Heart right ventricle (tissue), 16 donors: ENCODE measurements at regions of chr22 and their contacts with region 1.

Region 1: DNA sequence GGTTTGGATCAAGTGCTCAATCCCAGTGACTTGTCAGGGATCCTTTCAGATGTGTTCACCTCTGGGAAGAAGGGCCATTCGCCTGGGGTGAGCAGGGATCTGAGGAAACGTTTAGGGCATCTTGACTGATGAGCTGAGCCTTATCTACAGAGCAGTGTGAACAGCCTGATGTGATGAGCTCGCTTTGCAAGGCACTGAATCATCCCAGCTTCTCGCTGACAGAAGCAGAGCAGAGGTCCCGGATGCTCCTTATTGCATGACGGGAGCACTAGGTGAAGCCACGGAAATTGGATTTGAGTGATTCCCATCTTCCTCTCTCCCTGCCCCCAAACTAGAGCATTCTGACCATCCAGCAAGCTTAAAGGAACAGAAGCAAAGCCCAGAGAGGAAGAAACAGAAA is 46.5 kb downstream of the SEZ6L start:
- DNase-seq: no peak
- ATAC-seq: no peak
- H3K4me3 ChIP-seq: no peak overlapping the region
- H3K27ac ChIP-seq: no peak overlapping the region
- H3K4me1 ChIP-seq: no peaks in the 10 kb centered on the region
- H3K27me3 ChIP-seq: peaks cover 0 to 67% (median 50%) of the 10 kb centered on the region in 7 donors
- CTCF ChIP-seq: no peak

Region 2: DNA sequence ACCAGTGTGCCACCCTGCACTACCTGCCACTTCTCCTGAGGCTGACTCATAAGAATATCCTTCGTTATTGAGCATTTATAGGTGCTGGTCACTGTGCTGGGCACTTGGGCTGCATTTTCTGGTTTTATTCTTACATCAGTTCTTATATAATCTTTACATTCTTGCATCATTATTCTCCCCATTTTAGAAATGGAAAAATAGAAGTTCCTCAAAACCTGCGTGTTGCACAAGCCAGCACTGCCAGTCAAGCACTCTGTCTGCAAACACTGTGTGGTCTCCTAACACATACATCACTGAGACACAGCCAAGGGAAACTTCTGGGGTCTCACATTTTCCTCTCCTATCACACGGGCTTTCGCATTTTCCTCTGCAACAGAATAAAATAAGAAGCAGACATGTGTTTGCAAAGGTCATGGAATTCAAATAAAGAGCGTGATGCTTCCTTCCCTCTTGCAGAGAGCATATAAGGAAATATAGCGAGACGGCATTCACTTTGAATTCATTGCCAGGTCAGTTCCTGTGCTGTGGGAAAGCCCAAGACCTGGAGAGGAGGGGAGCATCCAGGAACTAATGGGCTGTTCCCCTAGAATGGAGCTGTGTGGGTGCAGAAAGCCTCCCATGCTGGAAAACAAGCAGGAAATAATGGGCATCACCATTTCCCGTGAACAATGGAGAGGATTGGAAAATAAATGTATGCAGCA is 120.3 kb before region 1 on chr22:
- intact Hi-C with region 1: no loop called
- DNase-seq: no peak
- ATAC-seq: no peak
- H3K4me3 ChIP-seq: no peak overlapping the region
- H3K27ac ChIP-seq: no peak overlapping the region
- H3K4me1 ChIP-seq: no peaks in the 10 kb centered on the region
- H3K27me3 ChIP-seq: peaks cover 0 to 24% (median 14%) of the 10 kb centered on the region in 7 donors
- CTCF ChIP-seq: no peak

Region 3: DNA sequence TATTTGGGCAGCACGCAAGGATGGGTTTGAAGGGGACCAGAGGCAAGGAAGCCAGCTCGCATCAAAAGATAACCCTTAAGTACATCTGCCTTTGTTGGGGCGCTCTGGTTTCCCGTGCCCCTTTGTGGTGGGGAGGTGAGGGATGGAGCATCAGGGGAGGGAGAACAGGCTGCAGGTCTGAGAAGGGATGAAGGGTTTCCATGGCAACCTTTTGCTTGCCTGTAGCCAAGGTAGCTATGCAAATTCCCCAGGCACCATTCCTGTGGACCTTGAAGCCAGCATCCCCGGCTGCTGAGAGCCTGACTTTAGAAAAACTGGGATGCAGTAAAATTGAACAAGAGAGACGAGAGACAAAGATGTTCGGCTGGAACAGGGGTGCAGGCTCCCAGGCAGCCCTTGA is 29.3 kb after region 1 on chr22:
- intact Hi-C with region 1: loop called in 1 of 10 experiments (anchors 2 kb)
- DNase-seq: no peak
- ATAC-seq: no peak
- H3K4me3 ChIP-seq: no peak overlapping the region
- H3K27ac ChIP-seq: no peak overlapping the region
- H3K4me1 ChIP-seq: no peaks in the 10 kb centered on the region
- H3K27me3 ChIP-seq: peaks cover 0 to 38% (median 18%) of the 10 kb centered on the region in 7 donors
- CTCF ChIP-seq: no peak

Region 4: DNA sequence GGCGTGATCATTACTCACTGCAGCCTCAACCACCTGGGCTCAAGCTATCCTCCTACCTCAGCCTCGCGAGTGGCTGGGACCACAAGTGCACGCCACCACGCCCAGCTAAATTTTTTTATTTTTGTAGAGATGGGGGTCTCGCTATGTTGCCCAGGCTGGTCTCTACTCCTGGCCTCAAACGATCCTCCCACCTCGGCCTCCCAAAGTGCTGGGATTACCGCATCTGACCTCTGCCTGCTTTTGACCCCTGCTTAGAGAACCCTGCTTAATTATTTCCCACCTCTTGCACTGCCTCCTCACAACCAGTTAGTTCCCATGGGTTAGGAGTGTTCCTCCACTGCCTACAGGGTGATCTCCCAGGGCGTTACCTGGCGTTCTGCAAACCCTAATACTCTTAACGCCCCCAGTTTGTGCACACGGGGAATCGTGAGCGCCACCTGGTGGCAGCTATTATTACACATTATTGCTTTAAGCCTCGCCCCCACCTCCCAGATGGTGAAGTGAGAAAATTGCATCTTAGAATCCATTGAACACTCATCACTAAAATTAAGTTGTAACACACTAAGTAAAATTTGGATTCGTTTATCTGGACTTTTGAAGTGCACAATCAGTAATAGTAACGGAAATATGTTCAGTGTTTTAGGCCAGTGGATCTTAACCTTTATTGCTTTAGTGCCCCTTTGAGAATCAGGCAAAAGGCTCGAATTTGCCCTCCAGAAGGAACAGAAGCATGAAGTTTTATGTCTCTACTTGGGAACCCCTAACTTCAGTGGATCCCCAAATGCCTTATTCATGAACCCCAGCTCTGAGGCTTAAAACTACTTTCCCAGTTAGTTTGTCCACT is 151.9 kb after region 1 on chr22:
- intact Hi-C with region 1: no loop called
- DNase-seq: peak in 1 of 2 donors; percentile 8
- ATAC-seq: no peak
- H3K4me3 ChIP-seq: no peak overlapping the region
- H3K27ac ChIP-seq: no peak overlapping the region
- H3K4me1 ChIP-seq: no peaks in the 10 kb centered on the region
- H3K27me3 ChIP-seq: peaks cover 0 to 33% (median 17%) of the 10 kb centered on the region in 7 donors
- CTCF ChIP-seq: peak; percentile 50 to 82 (median 75)